ENCODE measurements at regions of chr4 and their contacts with region 1.

Region 1: GRCh38 chr4:173013232-173013930 is 155.2 kb upstream of the GALNT7 start:
- DNase-seq: peak in 4 of 10 donors; percentile 29 to 41 (median 36)

Region 2: GRCh38 chr4:172950990-172951389 is 62.4 kb before region 1 on chr4:
- intact Hi-C with region 1: no loop called
- DNase-seq: no peak

Region 3: GRCh38 chr4:173288296-173288695 is 274.9 kb after region 1 on chr4:
- intact Hi-C with region 1: no loop called
- DNase-seq: peak in 5 of 10 donors; percentile 14 to 65 (median 50)

Region 4: GRCh38 chr4:173301518-173302201 is 288.3 kb after region 1 on chr4:
- intact Hi-C with region 1: loop called (anchors 2 kb)
- DNase-seq: no peak

Measured in posterior cingulate gyrus (tissue), 11 donors.